ENCODE measurements at regions of chr14 and their contacts with region 1.

Region 1: DNA sequence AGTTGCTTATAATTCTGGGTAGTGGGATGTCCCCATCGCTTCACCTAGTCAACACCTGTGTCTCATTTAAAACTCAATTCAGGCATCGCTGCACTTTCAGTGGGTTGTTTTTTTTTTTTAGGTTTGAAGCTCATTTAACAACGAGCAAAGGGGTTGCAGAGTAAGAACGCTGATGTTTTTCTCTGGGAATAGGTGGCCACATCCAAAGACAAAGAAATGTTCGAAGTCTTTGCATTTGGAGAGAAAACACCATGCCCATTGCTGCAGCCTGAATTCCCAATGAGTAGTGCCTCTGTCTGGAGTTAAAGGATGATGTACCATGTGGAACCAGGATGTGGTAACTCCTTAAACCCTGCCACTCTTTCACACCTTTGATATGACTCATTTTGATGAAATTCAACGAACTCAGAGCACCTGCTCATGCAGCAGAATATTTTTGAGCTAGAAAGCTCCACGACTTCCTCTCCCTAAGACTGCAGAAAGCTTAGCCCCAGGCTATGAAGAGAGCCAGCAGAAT is 35.1 kb upstream of the BATF start:
- DNase-seq: peak; percentile 25
- H3K4me3 Mint-ChIP-seq: no peak overlapping the region
- H3K27ac Mint-ChIP-seq: peak overlapping the region; percentile 62
- H3K4me1 Mint-ChIP-seq: peaks cover 22% of the 10 kb centered on the region
- H3K27me3 Mint-ChIP-seq: peaks cover 2% of the 10 kb centered on the region

Region 2: DNA sequence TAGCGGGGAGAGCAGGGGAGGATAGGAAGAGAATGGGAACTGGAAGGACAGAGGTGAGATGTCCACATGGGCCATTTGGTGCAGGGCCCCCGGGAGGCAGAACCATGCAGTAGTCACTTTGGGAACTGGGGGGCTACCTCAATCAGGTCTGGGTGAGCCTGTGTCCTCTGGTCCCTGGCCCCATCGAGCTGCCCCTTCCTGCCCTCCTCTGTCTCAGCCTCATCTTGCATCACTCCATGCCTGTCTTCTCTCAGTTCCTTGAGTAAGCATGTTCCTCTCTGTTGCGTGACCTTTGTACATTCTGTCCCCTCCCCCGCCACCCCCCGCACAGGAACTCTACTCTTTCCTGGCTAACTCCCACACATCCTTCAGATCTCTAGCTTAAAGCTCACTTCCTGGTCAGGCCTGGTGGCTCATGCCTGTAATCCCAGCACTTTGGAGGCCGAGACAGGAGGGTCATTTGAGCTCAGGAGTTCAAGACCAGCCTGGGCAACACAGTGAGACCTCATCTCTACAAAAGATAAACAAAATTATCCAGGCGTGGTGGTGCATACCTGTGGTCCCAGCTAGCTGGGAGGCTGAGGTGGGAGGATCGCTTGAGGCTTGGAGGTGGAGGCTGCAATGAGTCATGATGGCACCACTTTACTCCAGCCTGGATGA is 185.4 kb before region 1 on chr14:
- CTCF ChIA-PET with region 1: interaction called, 98 read pairs
- POLR2A ChIA-PET with region 1: no interaction called
- intact Hi-C with region 1: no loop called
- DNase-seq: peak; percentile 71
- H3K4me3 Mint-ChIP-seq: no peak overlapping the region
- H3K27ac Mint-ChIP-seq: peak overlapping the region; percentile 76
- H3K4me1 Mint-ChIP-seq: peaks cover 23% of the 10 kb centered on the region
- H3K27me3 Mint-ChIP-seq: no peaks in the 10 kb centered on the region

Region 3: DNA sequence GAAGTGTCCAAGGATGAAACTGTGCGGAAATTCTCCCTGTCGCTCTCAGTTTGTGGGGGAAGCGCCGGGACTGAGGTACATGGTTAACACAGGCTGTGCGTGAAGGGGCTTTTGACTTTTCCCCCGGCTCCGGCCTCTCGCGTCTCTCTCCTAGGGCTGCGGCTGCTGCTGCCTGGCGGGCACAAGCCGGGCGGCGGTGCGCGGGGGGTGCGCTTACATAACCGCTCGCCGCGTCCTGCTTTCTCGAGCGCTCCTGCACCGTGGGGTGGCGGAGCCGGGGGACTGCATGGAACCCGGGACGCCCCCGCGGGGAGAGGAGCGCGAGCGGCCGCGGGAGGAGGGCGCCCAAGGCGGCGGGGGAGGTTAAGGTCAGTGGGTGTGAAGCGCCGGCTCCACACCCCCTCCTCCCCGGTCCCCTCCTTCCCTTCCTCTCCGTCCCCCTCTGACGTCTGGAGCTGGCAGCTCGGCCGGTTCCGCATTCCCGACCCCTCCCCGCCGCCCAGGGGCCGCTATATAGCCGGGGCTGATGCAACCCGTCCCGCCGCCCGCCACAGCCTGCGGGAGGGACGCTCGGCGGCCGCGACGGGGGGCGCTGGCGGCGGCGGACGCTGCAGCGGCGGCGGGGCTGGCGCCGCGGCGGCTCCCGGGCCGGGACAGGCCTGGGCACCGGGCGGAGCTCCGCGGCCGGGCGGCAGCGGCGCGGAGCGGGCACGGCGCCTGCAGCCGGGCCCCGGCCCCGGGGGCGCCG is 59.6 kb before region 1 on chr14 and contains the start of gene JDP2:
- CTCF ChIA-PET with region 1: interaction called, 6 read pairs
- POLR2A ChIA-PET with region 1: no interaction called
- intact Hi-C with region 1: loop called (anchors 5 kb)
- DNase-seq: peak; percentile 55
- H3K4me3 Mint-ChIP-seq: peak within 1 kb of the TSS; percentile 70
- H3K27ac Mint-ChIP-seq: no peak within 1 kb of the TSS
- H3K4me1 Mint-ChIP-seq: peaks cover 12% of the 10 kb centered on the region
- H3K27me3 Mint-ChIP-seq: peaks cover 19% of the 10 kb centered on the region
- total RNA-seq, gene JDP2: 1.7 to 1.8 TPM

Region 4: GRCh38 chr14:75514673-75515628 is 27.7 kb after region 1 on chr14:
- CTCF ChIA-PET with region 1: interaction called, 28 read pairs
- POLR2A ChIA-PET with region 1: interaction called, 4 read pairs
- intact Hi-C with region 1: loop called (anchors 5 kb)
- DNase-seq: peak; percentile 77
- H3K4me3 Mint-ChIP-seq: peak overlapping the region; percentile 80
- H3K27ac Mint-ChIP-seq: peak overlapping the region; percentile 95
- H3K4me1 Mint-ChIP-seq: peaks cover 69% of the 10 kb centered on the region
- H3K27me3 Mint-ChIP-seq: no peaks in the 10 kb centered on the region

Region 5: DNA sequence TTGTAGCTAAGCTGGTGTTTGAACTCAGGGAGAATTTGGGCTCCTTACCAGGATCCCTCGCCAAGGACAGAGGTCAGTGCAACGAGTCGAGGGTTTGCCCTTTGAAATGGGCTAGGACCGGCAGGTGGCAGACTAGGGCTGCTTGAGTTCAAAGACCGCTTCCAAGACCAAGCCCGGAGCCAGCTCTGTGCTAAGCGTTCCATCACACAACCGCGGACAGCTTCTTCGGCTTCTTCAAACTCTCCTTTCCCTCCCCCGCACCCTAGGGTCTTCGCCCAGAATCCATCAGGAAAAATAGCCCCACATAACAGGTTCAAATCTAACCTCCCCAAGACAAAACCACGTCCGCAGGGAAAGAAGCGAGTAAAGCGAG is 90.5 kb after region 1 on chr14:
- CTCF ChIA-PET with region 1: interaction called, 10 read pairs
- POLR2A ChIA-PET with region 1: no interaction called
- intact Hi-C with region 1: no loop called
- DNase-seq: peak; percentile 87
- H3K4me3 Mint-ChIP-seq: peak overlapping the region; percentile 86
- H3K27ac Mint-ChIP-seq: peak overlapping the region; percentile 88
- H3K4me1 Mint-ChIP-seq: peaks cover 13% of the 10 kb centered on the region
- H3K27me3 Mint-ChIP-seq: no peaks in the 10 kb centered on the region

Region 6: GRCh38 chr14:75636100-75636692 is 149.0 kb after region 1 on chr14:
- CTCF ChIA-PET with region 1: no interaction called
- POLR2A ChIA-PET with region 1: no interaction called
- intact Hi-C with region 1: no loop called
- DNase-seq: no peak
- H3K4me3 Mint-ChIP-seq: no peak overlapping the region
- H3K27ac Mint-ChIP-seq: no peak overlapping the region
- H3K4me1 Mint-ChIP-seq: no peaks in the 10 kb centered on the region
- H3K27me3 Mint-ChIP-seq: no peaks in the 10 kb centered on the region

Measured in activated CD4-positive, alpha-beta memory T cell treated with anti-CD3 and anti-CD28 coated beads for 36 hours (primary cell).